WTC11 (cell line): ENCODE measurements at regions of chr12 and their contacts with region 1.

Region 1: DNA sequence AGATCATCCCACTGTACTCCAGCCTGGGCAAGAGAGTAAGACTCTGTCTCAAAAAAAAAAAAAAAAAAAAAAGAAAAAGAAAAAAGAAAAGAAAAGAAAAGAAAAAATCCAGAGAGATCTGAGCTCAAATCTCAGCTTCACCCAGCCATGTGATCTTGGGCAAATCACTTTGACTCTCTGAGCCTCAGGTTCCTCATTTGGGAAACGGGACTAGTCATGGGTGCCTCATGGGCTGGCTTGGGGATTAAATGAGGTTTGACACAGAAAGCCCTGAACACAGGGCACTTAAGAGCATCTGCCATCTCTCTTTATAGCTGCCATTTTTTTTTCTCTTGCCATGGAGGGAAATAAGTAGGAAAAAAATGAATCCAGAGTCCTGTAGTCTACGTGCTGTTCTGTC is 86.2 kb upstream of the MYL2 start:
- DNase-seq: no peak
- ATAC-seq: no peak
- H3K4me3 Mint-ChIP-seq: no peak overlapping the region
- H3K27ac Mint-ChIP-seq: no peak overlapping the region
- H3K4me1 Mint-ChIP-seq: no peaks in the 10 kb centered on the region
- H3K27me3 Mint-ChIP-seq: peaks cover 60% of the 10 kb centered on the region
- CTCF ChIP-seq: no peak

Region 2: DNA sequence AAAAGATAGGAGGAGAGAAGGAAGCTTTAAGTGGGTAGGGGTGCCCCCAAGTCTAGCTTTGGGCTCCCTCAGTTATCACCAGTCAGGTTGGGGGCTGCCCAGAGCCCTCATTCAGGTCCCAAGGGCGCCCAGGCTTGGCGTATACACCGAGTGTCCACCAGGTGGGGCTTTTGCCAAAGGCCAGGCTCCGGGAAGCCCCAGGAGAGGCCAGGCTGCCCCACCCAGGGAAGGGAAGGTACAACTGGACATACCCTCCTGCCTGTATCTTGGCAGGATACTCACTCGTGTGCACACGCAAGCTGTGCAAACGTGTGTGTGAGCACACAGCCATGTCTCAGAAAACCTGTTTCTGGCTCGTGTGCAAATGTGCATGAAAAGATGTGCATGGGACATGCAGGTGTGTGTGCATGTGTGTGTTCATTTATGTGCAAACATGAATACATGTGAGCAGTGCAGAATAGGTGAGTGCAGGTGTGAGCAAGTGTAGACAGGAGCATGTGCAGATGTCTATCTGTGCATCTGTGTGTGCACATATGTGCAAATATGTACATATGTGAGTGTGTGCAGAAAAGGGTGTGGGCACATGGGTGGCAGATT is 17.7 kb after region 1 on chr12:
- CTCF ChIA-PET with region 1: interaction called, 21 read pairs
- POLR2A ChIA-PET with region 1: no interaction called
- DNase-seq: peak; percentile 84
- ATAC-seq: peak; percentile 96
- H3K4me3 Mint-ChIP-seq: no peak overlapping the region
- H3K27ac Mint-ChIP-seq: no peak overlapping the region
- H3K4me1 Mint-ChIP-seq: peaks cover 7% of the 10 kb centered on the region
- H3K27me3 Mint-ChIP-seq: peaks cover 36% of the 10 kb centered on the region
- CTCF ChIP-seq: peak; percentile 62; the same call in 1 of the 2 replicates